ENCODE measurements at regions of chr1 and their contacts with region 1.

Region 1: GRCh38 chr1:205791568-205792180 is 16.4 kb upstream of the RAB29 start:
- DNase-seq: no peak
- H3K4me3 ChIP-seq: no peak overlapping the region
- H3K27ac ChIP-seq: no peak overlapping the region
- H3K4me1 ChIP-seq: no peaks in the 10 kb centered on the region
- H3K27me3 ChIP-seq: no peaks in the 10 kb centered on the region
- CTCF ChIP-seq: peak; percentile 65 to 75 (median 74)

Region 2: GRCh38 chr1:205775015-205775716 is 16.5 kb before region 1 on chr1 and contains the start of gene RAB29:
- intact Hi-C with region 1: no loop called
- DNase-seq: peak; percentile 58 to 93
- H3K4me3 ChIP-seq: peak within 1 kb of the TSS; percentile 77 to 93
- H3K27ac ChIP-seq: peak within 1 kb of the TSS; percentile 82 to 90
- H3K4me1 ChIP-seq: peaks cover 5 to 11% of the 10 kb centered on the region in 2 donors
- H3K27me3 ChIP-seq: no peaks in the 10 kb centered on the region
- CTCF ChIP-seq: no peak
- total RNA-seq, gene RAB29: 18.0 TPM

Region 3: DNA sequence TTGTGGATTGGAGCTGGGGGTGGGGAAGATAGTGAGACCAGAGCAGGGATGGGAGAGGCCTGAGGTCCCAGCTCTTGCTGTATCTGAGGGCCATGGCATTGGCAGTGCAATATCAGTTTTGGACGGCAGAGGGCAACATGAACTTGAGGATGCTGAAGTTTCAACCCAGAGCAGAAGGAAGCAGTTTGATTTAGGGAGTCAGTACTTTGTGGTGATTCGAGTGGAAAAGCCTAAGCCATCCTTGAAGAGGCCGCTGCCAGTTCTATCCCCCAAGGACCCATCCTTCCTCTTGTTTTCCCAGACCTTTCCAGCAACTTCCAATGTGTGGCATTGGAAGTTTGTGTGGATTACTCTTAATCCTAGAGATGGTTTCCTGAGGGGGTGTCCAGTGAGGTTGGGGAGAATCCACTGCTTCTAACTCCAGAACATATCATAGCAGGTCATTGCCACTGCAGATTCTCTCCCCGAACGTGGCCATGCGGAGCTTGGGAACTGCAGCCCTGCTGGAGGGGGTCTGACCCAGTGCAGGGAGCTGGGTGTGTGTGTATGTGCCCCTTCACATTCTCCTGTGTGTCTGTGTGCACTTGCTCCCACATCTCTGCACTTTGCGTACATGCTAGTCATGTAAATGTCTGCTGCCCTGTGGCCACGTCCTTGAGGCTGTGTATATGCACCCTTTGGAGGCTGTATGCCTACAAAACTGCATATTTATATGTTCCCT is 127.5 kb after region 1 on chr1:
- intact Hi-C with region 1: loop called (anchors 1 kb)
- DNase-seq: peak; percentile 33 to 91
- H3K4me3 ChIP-seq: no peak overlapping the region
- H3K27ac ChIP-seq: peak overlapping the region; percentile 72 to 73
- H3K4me1 ChIP-seq: peaks cover 22 to 60% of the 10 kb centered on the region in 2 donors
- H3K27me3 ChIP-seq: no peaks in the 10 kb centered on the region
- CTCF ChIP-seq: peak; percentile 84 to 95 (median 90)

Region 4: DNA sequence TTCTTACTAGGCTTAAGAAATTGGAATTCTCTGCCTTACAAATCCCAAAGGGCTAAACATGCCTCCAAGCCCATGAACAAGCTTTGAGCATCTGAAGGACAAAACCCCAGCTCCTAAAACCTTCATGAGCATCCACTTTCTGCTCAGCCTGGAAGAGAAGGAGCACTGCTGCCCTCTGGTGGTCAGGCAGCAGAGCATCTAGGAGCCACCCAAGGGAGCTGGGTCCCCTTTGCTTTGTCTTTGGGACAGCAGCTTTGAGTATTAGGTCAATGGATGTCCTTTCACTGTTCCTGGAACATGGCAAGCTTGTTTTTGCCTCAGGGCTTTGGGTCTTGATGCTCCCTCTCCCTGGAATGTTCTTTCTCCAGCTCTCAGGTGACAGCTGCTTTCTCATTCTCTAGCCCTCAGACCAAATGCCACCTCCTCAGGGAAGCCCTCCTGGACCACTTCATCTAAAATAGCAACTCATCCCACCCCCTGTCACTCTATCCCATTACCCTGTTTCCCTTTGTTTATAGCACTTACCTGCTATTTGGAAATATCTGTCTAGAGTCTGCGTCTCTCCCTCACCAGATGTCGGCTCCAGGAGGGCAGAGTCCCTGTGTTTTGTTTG is 185.8 kb after region 1 on chr1:
- intact Hi-C with region 1: loop called (anchors 1 kb)
- DNase-seq: peak in 1 of 2 donors; percentile 75
- H3K4me3 ChIP-seq: no peak overlapping the region
- H3K27ac ChIP-seq: no peak overlapping the region
- H3K4me1 ChIP-seq: peaks cover 0 to 7% of the 10 kb centered on the region in 2 donors
- H3K27me3 ChIP-seq: no peaks in the 10 kb centered on the region
- CTCF ChIP-seq: peak; percentile 90 to 97 (median 93)